Motor neuron (in vitro differentiated cells): ENCODE measurements at regions of chr2 and their contacts with region 1.

Region 1: DNA sequence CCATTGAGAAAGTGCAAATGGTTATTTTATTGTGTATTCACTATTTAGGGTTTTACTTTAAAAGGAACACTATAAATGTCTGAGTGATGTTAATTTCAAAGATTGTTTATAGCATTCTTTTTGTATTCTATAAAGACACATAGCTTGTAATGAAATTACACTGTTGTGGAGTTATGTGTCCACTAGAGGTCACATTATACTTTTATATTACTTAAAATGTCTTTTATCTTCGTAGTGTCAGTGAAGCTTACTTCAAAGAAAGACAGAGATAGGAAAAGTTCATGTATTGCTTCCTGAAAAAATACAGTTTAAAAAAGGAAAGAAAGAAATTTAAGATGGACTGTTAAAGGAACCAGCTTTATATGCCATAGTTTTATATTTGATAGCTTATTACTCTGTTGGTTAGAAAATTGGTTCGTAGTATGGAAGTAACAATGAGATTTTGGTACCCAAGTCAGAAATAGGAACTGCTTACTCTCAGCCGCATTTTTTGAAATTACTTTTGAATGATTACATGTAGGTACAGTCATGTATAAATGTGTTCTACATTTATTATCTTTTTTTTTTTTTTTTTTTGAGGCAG is 20.5 kb downstream of the APLF start:
- ATAC-seq: peak in 3 of 8 experiments; percentile 50 to 59 (median 54)
- H3K4me3 ChIP-seq: no peak overlapping the region
- H3K27ac ChIP-seq: no peak overlapping the region
- H3K4me1 ChIP-seq: no peaks in the 10 kb centered on the region

Region 2: DNA sequence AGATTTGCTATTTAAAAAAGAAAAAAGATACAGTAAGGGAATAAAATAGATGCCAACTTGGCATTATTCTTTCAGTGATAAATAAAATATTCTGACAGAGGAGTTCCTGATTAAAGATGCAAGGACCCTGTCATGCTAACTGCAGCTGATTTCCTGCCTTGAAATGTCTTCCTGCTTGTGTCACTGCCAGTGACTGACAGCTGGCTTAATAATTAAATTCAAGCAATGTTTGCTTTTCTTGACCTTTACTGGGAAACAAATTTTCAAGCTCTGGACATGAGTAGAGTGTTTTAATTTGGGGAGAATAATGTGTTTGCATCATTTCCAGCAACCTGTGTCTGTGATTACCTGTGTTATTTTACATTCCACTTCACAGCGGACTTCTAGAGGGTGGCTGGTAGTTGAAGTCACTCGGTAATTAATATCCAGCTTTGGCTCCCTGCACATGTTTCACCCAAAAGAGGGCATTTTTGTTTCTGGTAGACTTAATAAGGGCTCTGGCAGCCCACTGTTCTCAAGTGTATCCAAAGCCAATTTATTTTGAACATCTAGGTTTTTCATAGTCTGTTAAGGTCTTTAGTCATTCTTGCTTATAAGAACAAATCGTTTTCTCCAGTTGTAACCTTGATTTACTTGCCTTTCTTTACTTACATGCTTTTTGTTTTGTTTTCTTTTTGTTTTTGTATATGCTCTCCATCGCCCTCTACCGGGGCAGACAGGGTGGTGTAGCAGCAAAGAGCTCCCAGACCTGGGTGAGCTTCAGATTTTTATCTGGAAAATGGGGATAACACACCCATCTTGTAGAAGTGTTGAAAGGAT is 107.0 kb after region 1 on chr2:
- in situ Hi-C with region 1: loop called in 3 of 9 experiments (anchors 25 kb)
- ATAC-seq: peak in 3 of 8 experiments; percentile 56 to 61 (median 57)
- H3K4me3 ChIP-seq: no peak overlapping the region
- H3K27ac ChIP-seq: no peak overlapping the region
- H3K4me1 ChIP-seq: no peaks in the 10 kb centered on the region

Region 3: DNA sequence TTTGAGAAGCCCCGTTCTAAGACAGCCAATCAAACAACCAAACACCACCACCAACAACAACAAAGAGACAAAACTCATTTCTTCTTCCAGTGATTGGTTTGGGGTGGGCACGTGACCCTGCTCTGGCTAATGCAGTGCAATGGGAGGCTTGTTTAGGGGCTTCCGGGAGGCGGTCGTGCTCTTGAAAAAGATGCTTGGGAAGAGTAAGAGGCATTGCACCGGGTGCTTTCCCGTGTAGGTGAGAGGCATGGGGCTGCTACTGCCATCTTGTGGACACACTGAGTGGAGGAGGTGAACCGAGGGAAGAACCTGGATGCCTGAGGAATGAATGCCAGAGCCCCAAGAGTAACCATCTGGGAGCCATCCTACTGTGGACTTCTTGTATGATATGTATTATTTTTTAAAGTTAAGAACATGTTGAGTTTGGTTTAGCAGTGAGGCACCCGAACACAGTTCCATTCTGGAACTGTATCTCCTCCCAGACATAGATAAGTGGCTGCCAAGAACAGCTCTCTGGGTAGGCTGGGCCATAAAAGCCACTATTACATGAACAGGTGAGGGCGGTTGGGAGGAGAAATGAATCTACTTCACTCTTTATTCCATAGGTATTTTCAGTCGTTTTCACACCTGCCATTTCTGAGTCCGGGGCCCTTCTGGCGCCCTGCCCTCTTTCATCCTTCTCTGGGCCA is 227.6 kb after region 1 on chr2:
- in situ Hi-C with region 1: loop called in 3 of 9 experiments (anchors 25 kb)
- ATAC-seq: peak in 3 of 8 experiments; percentile 73 to 99 (median 80)
- H3K4me3 ChIP-seq: no peak overlapping the region
- H3K27ac ChIP-seq: no peak overlapping the region
- H3K4me1 ChIP-seq: no peaks in the 10 kb centered on the region

Region 4: DNA sequence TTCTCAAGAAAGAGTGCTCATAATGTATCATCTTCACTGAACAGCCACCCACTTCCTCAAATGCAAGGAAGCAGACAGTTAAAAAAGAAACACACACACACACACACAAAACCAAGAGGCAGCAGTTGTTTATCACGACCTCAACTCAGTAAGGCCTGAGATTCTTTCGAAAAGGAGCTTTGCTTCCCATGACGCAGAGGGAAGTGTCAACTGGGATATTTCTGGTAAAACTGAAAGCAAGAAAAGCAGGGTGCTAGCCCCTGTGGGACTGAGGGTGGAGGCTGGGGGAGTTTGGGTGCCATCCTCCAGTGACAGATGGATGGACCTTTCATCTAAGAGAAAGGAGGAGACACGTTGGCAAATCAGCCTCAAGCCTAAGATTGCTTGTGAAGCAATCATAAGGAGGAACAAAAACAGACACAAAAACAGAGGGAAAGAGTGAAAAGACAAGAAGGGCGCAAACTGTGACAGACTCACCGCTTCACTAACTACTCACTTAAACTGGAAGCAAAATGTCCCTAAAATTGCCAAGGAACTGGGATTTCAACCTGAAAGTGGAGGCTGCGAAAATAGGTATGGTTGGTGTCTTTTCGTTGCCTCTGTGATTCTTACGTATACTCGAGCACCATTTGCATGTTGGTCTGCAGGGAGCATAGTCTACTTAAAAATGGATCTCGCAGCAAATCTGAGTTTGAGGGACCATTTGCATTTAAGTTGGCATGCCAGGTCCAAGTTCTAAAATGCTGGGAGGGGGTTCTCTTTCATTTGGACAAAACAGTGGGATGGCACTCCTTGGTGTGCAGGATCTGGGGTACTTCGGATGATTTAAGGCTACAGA is 247.0 kb after region 1 on chr2 and contains the start of gene ARHGAP25:
- in situ Hi-C with region 1: no loop called
- ATAC-seq: no peak
- H3K4me3 ChIP-seq: no peak within 1 kb of the TSS
- H3K27ac ChIP-seq: no peak within 1 kb of the TSS
- H3K4me1 ChIP-seq: no peaks in the 10 kb centered on the region
- total RNA-seq, gene ARHGAP25: 0.22 to 4.7 (median 2.2) TPM in 7 of 8 experiments, not detected in the other